Esophagus squamous epithelium (tissue), 5 donors: ENCODE measurements at regions of chr3 and their contacts with region 1.

Region 1: GRCh38 chr3:52001443-52001974 is 5.8 kb upstream of the RPL29 start:
- DNase-seq: no peak
- H3K4me3 ChIP-seq: no peak overlapping the region
- H3K27ac ChIP-seq: no peak overlapping the region
- H3K4me1 ChIP-seq: peaks cover 13 to 44% (median 30%) of the 10 kb centered on the region in 3 donors
- H3K27me3 ChIP-seq: peaks cover 0 to 7% (median 0%) of the 10 kb centered on the region in 4 donors
- CTCF ChIP-seq: peak; percentile 85 to 94 (median 90)
- POLR2A ChIP-seq: no peak

Region 2: GRCh38 chr3:52056968-52057805 is 55.7 kb after region 1 on chr3:
- intact Hi-C with region 1: loop called (anchors 5 kb)
- DNase-seq: peak; percentile 97
- H3K4me3 ChIP-seq: peak overlapping the region; percentile 82 to 92 (median 83)
- H3K27ac ChIP-seq: peak overlapping the region; percentile 94 to 98 (median 96)
- H3K4me1 ChIP-seq: peaks cover 49 to 90% (median 60%) of the 10 kb centered on the region in 3 donors
- H3K27me3 ChIP-seq: no peaks in the 10 kb centered on the region
- CTCF ChIP-seq: peak in 2 of 6 experiments; percentile 12 to 26
- POLR2A ChIP-seq: peak in 3 of 4 donors; percentile 20 to 69 (median 64)

Region 3: DNA sequence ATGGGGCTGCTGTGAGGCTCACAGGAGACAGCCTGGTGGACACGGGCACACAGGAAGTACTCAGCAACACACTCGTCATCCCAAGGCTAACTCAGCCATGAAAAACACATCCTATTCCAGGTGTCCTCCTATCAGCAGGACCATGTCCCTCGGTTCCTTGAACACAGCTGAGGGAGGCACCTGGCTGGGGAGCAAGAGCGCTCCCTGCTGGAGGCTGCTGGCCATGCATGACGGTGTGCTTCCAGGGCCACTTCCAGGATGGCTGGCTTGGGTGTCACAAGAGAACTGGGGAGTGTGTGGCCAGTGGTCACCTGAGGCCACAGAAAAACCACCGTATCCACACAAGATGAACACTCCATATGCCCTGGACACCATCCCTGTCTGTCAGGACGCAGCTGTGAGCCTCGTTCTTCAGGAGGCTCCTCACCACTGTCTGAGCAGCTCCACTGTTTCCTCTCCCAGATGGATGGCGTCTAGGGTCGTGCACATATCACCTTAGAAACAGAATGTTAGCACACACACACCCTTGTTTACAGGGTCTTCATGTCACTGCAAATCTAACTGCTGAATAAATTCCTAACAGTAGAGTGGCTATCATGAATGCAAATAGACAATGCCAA is 121.7 kb after region 1 on chr3:
- intact Hi-C with region 1: loop called (anchors 5 kb)
- DNase-seq: no peak
- H3K4me3 ChIP-seq: no peak overlapping the region
- H3K27ac ChIP-seq: peak overlapping the region; percentile 23 to 70 (median 48)
- H3K4me1 ChIP-seq: peaks cover 10 to 50% (median 26%) of the 10 kb centered on the region in 3 donors
- H3K27me3 ChIP-seq: no peaks in the 10 kb centered on the region
- CTCF ChIP-seq: peak; percentile 89 to 96 (median 94)
- POLR2A ChIP-seq: no peak

Region 4: GRCh38 chr3:52144034-52144795 is 142.7 kb after region 1 on chr3:
- intact Hi-C with region 1: loop called (anchors 5 kb)
- DNase-seq: peak; percentile 24
- H3K4me3 ChIP-seq: no peak overlapping the region
- H3K27ac ChIP-seq: no peak overlapping the region
- H3K4me1 ChIP-seq: peaks cover 0 to 14% (median 0%) of the 10 kb centered on the region in 3 donors
- H3K27me3 ChIP-seq: no peaks in the 10 kb centered on the region
- CTCF ChIP-seq: peak; percentile 92 to 99 (median 98)
- POLR2A ChIP-seq: no peak